K562 (cell line): ENCODE measurements at regions of chr14 and their contacts with region 1.

Region 1: DNA sequence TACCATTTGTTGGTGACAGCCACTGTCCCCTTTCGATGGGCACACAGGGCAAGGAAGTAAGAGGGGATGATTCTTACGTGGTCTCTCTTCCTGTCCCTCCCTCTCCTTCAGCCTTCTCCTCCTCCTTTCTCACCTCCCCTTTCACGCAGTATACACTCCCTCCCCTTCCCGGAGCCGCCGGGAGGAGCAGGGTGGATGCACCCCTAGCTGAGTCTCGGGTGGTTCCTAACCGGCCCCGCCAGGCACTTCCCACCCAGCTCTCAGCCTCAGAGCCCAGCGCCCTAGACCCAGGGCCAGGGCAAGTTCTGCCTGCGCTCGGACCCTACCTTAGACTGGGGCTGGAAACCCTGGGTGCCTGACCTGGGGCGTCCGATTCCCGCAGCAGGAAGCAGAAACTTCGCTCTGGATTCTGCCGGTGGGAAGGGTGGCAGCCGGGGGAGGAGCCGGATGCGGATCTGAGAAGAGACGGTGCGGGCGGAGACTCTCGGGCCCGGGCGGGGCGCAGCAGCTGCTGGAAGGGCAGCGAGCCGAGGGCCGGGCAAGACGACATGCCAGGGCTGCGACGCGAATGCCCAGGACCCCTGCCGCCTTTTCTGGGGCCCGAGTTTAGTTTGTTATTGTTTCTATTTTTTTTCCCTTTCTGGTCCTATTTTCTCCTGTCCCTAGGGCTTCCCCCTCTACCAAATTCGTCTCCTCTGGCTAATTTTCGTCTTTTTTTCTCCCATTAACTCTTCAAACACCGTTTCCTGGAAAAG is at the start of gene TEP1:
- DNase-seq: peak; percentile 60 to 77 (median 66)
- ATAC-seq: peak; percentile 94
- H3K4me3 ChIP-seq: peak within 1 kb of the TSS; percentile 93
- H3K27ac ChIP-seq: peak within 1 kb of the TSS; percentile 73
- H3K4me1 ChIP-seq: peaks cover 6 to 13% of the 10 kb centered on the region in 2 experiments; a peak in 4 of 5 replicates
- H3K27me3 ChIP-seq: no peaks in the 10 kb centered on the region
- CTCF ChIP-seq: no peak
- EP300 ChIP-seq: no peak
- POLR2A ChIP-seq: peak; percentile 77
- RAD21 ChIP-seq: no peak
- polyA plus RNA-seq, gene TEP1: 1.0 to 1.3 TPM

Region 2: DNA sequence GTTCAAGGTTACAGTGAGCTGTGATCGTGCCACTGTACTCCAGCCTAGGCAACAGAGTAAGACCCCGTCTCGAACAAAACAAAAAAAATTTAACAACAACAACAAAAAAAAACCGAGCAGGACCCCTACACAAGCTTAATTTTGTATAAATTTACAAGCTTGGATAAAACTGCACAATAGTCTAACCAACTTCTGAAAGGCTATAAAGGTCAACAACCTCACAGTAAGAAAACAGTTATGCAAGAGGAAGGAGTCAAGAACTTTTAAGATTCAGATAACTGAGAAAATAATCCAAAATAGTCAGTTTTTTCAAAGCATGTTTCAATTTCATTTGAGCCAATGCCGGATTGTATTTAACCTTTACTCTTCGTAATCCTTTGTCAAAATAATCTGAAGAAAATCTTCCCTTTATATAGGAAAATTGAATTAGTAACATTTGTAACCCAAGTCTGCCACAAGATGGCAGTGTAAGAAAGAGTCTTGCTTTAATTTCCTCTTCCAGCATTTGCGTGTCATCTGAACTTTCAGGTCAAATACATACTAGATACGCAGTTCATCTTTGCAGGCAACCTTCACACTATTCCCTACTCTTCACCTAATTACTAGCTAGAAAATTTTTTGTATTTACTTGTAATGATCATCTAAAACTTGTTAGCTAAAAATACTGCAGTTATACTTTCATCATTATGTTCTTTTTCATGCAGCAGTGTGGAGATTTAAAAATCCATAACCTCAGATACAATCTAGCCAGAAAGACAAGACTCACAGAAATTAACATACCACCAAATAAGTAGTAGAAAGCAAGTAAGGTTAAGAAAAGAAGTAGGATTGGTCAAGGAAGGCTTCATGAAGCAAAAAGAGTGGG is 86.0 kb before region 1 on chr14:
- CTCF ChIA-PET with region 1: no interaction called
- POLR2A ChIA-PET with region 1: no interaction called
- in situ Hi-C with region 1: no loop called
- intact Hi-C with region 1: loop called (anchors 5 kb)
- DNase-seq: peak in 2 of 4 experiments; percentile 27 to 72
- ATAC-seq: peak; percentile 34; the same call in 2 of the 3 replicates
- H3K4me3 ChIP-seq: no peak overlapping the region
- H3K27ac ChIP-seq: no peak overlapping the region
- H3K4me1 ChIP-seq: peaks cover 0 to 14% of the 10 kb centered on the region in 2 experiments; a peak in 2 of 5 replicates
- H3K27me3 ChIP-seq: no peaks in the 10 kb centered on the region
- CTCF ChIP-seq: peak; percentile 40 to 75 (median 47); a peak in 4 of 6 replicates
- EP300 ChIP-seq: no peak
- POLR2A ChIP-seq: no peak
- RAD21 ChIP-seq: peak; percentile 64 to 74

Region 3: GRCh38 chr14:20606190-20606901 is 193.1 kb after region 1 on chr14:
- CTCF ChIA-PET with region 1: interaction called, 5 read pairs
- POLR2A ChIA-PET with region 1: no interaction called
- in situ Hi-C with region 1: loop called (anchors 10 kb)
- intact Hi-C with region 1: loop called (anchors 2 kb)
- DNase-seq: peak in 2 of 4 experiments; percentile 44 to 66
- ATAC-seq: peak; percentile 69
- H3K4me3 ChIP-seq: no peak overlapping the region
- H3K27ac ChIP-seq: no peak overlapping the region
- H3K4me1 ChIP-seq: peaks cover 0 to 6% of the 10 kb centered on the region in 2 experiments; a peak in 3 of 5 replicates
- H3K27me3 ChIP-seq: no peaks in the 10 kb centered on the region
- CTCF ChIP-seq: peak; percentile 64 to 72 (median 71)
- EP300 ChIP-seq: no peak
- POLR2A ChIP-seq: no peak
- RAD21 ChIP-seq: peak; percentile 78 to 91